ENCODE measurements at regions of chr21 and their contacts with region 1.

Region 1: DNA sequence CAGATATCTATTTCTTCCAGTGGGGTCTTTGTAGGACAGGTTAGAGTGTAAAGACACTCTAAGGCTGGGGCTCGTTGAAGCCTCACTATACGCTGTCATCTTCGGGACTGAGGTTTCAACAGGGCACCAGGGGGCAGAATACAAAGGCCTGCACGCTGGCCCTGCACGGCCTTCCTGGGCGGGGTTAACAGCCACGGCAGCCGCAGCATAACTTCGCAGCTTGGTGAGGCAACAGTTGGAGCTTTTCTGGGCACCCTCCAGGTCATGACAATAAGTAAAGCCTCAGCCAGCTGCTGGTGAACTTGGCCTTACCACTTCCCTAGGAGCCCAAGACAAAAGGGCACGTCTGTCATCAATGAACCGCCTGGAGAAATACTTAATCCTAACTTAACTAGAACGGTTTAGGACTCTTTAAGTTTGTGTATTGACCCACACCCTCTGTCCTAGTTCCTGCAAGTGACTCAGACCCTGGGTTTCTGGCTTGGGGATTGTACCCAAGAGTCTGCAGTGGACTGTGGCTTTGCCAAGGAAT is 2.3 kb upstream of the RUNX1 start:
- DNase-seq: peak; percentile 94
- H3K4me3 Mint-ChIP-seq: peak overlapping the region; percentile 89
- H3K27ac Mint-ChIP-seq: peak overlapping the region; percentile 94
- H3K4me1 Mint-ChIP-seq: peaks cover 57% of the 10 kb centered on the region
- H3K27me3 Mint-ChIP-seq: peaks cover 4% of the 10 kb centered on the region

Region 2: GRCh38 chr21:34967509-34968289 is 83.7 kb before region 1 on chr21:
- intact Hi-C with region 1: loop called (anchors 1 kb)
- DNase-seq: peak; percentile 77
- H3K4me3 Mint-ChIP-seq: peak overlapping the region; percentile 79
- H3K27ac Mint-ChIP-seq: peak overlapping the region; percentile 96
- H3K4me1 Mint-ChIP-seq: peaks cover 81% of the 10 kb centered on the region
- H3K27me3 Mint-ChIP-seq: peaks cover 9% of the 10 kb centered on the region

Region 3: DNA sequence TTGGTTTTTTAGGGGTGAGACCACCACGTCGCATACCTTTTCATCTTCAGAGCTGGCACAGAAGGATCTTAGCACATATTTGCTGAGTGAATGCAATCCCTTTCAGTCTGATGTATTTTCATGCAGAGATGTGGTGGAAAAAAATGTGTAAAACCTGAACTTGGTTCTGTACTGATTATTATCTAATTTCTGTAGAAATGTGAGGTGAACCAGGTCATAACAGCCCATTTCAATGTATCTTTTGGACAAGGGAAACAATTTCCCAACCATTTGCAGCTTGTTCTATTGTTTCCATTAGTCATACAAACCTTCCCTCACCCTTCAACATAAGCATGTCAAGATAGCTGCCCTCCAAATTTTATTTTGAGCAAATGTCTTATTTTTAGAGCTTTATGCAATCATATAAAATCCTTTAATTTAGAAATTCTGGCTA is 44.5 kb after region 1 on chr21:
- intact Hi-C with region 1: loop called (anchors 1 kb)
- DNase-seq: no peak
- H3K4me3 Mint-ChIP-seq: no peak overlapping the region
- H3K27ac Mint-ChIP-seq: peak overlapping the region; percentile 92
- H3K4me1 Mint-ChIP-seq: peaks cover 29% of the 10 kb centered on the region
- H3K27me3 Mint-ChIP-seq: no peaks in the 10 kb centered on the region

Region 4: GRCh38 chr21:35198031-35198431 is 146.7 kb after region 1 on chr21:
- intact Hi-C with region 1: loop called (anchors 2 kb)
- DNase-seq: no peak
- H3K4me3 Mint-ChIP-seq: no peak overlapping the region
- H3K27ac Mint-ChIP-seq: peak overlapping the region; percentile 25
- H3K4me1 Mint-ChIP-seq: peaks cover 26% of the 10 kb centered on the region
- H3K27me3 Mint-ChIP-seq: no peaks in the 10 kb centered on the region

Region 5: GRCh38 chr21:35400233-35400957 is 349.0 kb after region 1 on chr21:
- intact Hi-C with region 1: loop called (anchors 1 kb)
- DNase-seq: peak; percentile 81
- H3K4me3 Mint-ChIP-seq: no peak overlapping the region
- H3K27ac Mint-ChIP-seq: no peak overlapping the region
- H3K4me1 Mint-ChIP-seq: peaks cover 28% of the 10 kb centered on the region
- H3K27me3 Mint-ChIP-seq: peaks cover 9% of the 10 kb centered on the region

Measured in activated CD4-positive, alpha-beta T cell treated with anti-CD3 and anti-CD28 coated beads, Interleukin-2, amount 10 ng/mL, durations not matched to agents 24 days and 14 days (primary cell).